Activated CD8-positive, alpha-beta T cell treated with anti-CD3 and anti-CD28 coated beads for 36 hours (primary cell): ENCODE measurements at regions of chr1 and their contacts with region 1.

Region 1: DNA sequence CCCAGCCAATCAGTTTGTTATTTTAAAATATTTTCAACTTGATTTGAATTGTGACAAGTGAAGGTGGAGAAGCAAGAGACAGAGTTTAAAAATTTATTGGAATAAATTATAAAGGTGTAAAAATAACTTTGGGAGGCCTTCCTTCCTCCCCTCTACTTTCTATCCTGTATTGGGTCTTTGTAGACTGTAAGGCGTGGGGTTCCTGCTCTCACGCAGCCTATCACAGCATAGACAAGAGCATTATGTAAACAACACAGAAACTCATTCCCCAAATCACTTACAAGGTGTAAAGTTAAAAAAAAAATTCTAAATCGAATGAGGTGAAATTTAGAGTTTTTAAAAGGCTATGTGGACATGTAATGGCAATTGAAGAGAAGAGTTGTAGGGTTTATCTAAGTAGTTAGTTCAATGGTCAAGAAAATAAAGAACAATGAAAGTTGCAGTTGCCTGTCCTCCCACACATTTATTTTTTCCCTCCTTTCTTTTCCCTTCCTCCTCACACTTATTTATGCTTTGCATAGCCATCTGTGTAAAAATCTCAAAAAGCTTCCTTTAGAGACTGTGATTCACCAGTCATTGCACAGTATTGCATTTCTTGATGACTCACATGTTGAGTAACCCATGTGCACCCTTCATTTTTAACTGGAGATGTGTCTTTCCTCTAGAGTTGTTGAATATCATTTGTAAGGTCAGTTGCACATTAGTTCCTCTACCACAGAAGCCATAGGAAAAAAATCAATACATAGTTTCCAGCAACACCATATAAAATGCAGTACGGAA is 242.2 kb downstream of the PTPRC start:
- DNase-seq: peak; percentile 32
- ATAC-seq: peak; percentile 93
- H3K4me3 Mint-ChIP-seq: no peak overlapping the region
- H3K27ac Mint-ChIP-seq: peak overlapping the region; percentile 85
- H3K4me1 Mint-ChIP-seq: peaks cover 39% of the 10 kb centered on the region
- H3K27me3 Mint-ChIP-seq: no peaks in the 10 kb centered on the region
- CTCF ChIP-seq: no peak

Region 2: DNA sequence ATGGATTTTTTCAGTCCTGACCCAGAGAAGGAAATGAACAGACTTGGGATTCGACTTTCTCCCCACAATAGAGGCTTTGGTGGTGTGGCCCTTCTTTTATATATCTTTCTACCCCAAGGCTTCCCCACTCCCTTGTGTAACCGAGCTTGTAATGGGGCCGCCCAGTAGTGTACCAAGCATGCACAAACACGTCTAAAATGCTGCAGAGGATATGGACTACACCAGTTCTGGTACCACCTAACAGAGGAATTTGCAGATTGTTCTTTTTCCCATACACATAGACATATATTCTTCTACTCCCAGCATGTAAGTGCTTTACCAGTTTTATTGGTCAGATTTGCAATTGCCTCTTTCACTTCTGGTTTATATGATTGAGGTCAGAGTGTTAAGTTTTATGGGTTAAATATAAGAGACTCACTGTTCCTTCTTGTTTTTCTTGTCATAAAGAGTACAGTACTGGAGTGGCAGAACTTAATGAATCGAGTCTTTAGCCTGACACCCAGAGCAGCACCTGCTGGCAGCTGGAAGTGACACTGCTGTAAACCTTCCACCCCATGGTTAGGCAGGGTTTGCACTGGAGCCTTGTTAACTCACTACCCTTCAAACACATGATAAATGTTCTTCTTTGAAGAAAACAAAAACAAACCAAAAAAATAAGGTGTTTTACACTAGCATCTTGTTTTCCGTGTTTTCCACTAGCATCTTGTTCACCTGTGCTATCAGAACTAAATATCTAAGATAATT is 43.6 kb before region 1 on chr1:
- CTCF ChIA-PET with region 1: no interaction called
- POLR2A ChIA-PET with region 1: no interaction called
- intact Hi-C with region 1: no loop called
- DNase-seq: no peak
- ATAC-seq: no peak
- H3K4me3 Mint-ChIP-seq: no peak overlapping the region
- H3K27ac Mint-ChIP-seq: no peak overlapping the region
- H3K4me1 Mint-ChIP-seq: no peaks in the 10 kb centered on the region
- H3K27me3 Mint-ChIP-seq: no peaks in the 10 kb centered on the region
- CTCF ChIP-seq: no peak

Region 3: GRCh38 chr1:198919667-198920398 is 38.8 kb after region 1 on chr1:
- CTCF ChIA-PET with region 1: no interaction called
- POLR2A ChIA-PET with region 1: no interaction called
- intact Hi-C with region 1: loop called (anchors 2 kb)
- DNase-seq: peak; percentile 33
- ATAC-seq: peak; percentile 79
- H3K4me3 Mint-ChIP-seq: peak overlapping the region; percentile 54
- H3K27ac Mint-ChIP-seq: peak overlapping the region; percentile 84
- H3K4me1 Mint-ChIP-seq: peaks cover 76% of the 10 kb centered on the region
- H3K27me3 Mint-ChIP-seq: no peaks in the 10 kb centered on the region
- CTCF ChIP-seq: no peak

Region 4: DNA sequence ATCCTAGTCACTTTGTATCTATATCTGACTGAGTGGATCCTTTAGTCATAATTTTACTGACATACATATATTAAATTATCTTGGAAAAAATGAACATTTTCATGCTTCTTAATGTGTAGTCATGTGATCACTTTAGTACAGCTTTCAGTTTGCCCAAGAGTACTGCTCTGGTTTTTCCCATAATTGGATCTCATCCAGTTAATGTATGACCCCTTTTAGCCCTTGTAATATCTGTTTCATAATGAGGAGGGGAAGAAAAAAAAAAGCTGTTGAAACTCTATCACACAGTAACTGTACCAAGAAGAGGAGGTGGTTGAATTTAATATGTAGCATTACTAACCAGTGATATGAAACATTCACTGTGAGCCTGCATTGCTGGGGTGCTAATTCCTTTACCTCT is 86.6 kb after region 1 on chr1:
- CTCF ChIA-PET with region 1: no interaction called
- POLR2A ChIA-PET with region 1: no interaction called
- intact Hi-C with region 1: no loop called
- DNase-seq: no peak
- ATAC-seq: peak; percentile 56
- H3K4me3 Mint-ChIP-seq: no peak overlapping the region
- H3K27ac Mint-ChIP-seq: no peak overlapping the region
- H3K4me1 Mint-ChIP-seq: peaks cover 37% of the 10 kb centered on the region
- H3K27me3 Mint-ChIP-seq: no peaks in the 10 kb centered on the region
- CTCF ChIP-seq: no peak